Endothelial cell of umbilical vein (primary cell): ENCODE measurements at regions of chr3 and their contacts with region 1.

Region 1: DNA sequence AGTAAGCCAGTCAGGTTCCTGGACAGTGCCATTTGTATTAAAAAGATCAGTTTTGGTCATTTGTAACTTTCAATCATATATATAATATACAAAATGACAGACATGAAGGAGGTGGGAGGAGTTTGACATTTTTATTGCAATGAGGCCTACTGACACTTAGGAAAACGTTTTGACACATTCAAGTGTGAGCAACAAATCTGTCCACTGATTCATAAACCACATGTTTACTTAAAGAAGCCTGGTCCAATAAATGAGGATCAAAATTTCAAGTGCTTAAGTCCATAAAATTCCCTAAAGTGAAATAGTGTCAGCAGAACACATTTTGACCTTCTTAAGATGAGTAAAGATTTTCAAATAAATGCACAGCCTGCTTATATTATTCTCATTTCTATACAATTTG is 137.3 kb downstream of the MECOM start:
- DNase-seq: peak; percentile 75
- H3K4me3 ChIP-seq: no peak overlapping the region
- H3K27ac ChIP-seq: peak overlapping the region; percentile 71
- H3K4me1 ChIP-seq: peaks cover 40% of the 10 kb centered on the region
- H3K27me3 ChIP-seq: no peaks in the 10 kb centered on the region
- CTCF ChIP-seq: no peak
- POLR2A ChIP-seq: no peak

Region 2: GRCh38 chr3:169509359-169509758 is 16.9 kb before region 1 on chr3:
- CTCF ChIA-PET with region 1: interaction called, 4 read pairs
- POLR2A ChIA-PET with region 1: no interaction called
- dilution Hi-C with region 1: no loop called
- intact Hi-C with region 1: loop called (anchors 1 kb)
- DNase-seq: peak; percentile 38
- H3K4me3 ChIP-seq: no peak overlapping the region
- H3K27ac ChIP-seq: peak overlapping the region; percentile 27
- H3K4me1 ChIP-seq: peaks cover 25% of the 10 kb centered on the region
- H3K27me3 ChIP-seq: no peaks in the 10 kb centered on the region
- CTCF ChIP-seq: no peak
- POLR2A ChIP-seq: no peak

Region 3: DNA sequence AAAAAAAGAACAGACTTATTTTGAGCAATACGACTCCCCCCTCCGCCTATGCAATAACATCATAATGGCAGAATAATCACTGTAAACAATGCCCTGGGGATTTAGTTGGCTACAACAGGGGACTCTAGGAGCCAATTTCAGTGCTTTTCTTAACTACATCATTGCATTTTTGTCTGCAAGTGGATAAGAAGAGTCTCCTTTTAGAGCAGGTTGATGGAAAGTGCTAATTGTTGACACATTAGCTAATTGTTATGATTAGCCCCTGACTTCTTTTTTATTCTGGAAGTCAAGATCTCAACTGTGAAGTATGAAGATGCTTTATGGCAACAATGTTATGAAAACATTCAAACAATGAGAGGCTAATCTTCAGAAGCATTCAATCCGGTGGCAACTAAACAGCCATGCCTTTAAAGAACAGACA is 16.1 kb after region 1 on chr3:
- CTCF ChIA-PET with region 1: no interaction called
- POLR2A ChIA-PET with region 1: no interaction called
- dilution Hi-C with region 1: no loop called
- intact Hi-C with region 1: no loop called
- DNase-seq: peak; percentile 81
- H3K4me3 ChIP-seq: no peak overlapping the region
- H3K27ac ChIP-seq: peak overlapping the region; percentile 5
- H3K4me1 ChIP-seq: peaks cover 10% of the 10 kb centered on the region
- H3K27me3 ChIP-seq: no peaks in the 10 kb centered on the region
- CTCF ChIP-seq: no peak
- POLR2A ChIP-seq: no peak